MCF 10A (cell line): ENCODE measurements at regions of chr4 and their contacts with region 1.

Region 1: GRCh38 chr4:108570993-108571569 is 49.3 kb upstream of the RPL34 start:
- DNase-seq: peak; percentile 29
- H3K4me3 Mint-ChIP-seq: no peak overlapping the region
- H3K27ac Mint-ChIP-seq: no peak overlapping the region
- H3K4me1 Mint-ChIP-seq: no peaks in the 10 kb centered on the region
- H3K27me3 Mint-ChIP-seq: no peaks in the 10 kb centered on the region
- CTCF ChIP-seq: no peak

Region 2: GRCh38 chr4:108018040-108018883 is 552.8 kb before region 1 on chr4:
- CTCF ChIA-PET with region 1: interaction called, 101 read pairs
- POLR2A ChIA-PET with region 1: interaction called, 3 read pairs
- intact Hi-C with region 1: loop called (anchors 1 kb)
- DNase-seq: peak; percentile 82
- H3K4me3 Mint-ChIP-seq: no peak overlapping the region
- H3K27ac Mint-ChIP-seq: peak overlapping the region; percentile 39
- H3K4me1 Mint-ChIP-seq: no peaks in the 10 kb centered on the region
- H3K27me3 Mint-ChIP-seq: no peaks in the 10 kb centered on the region
- CTCF ChIP-seq: peak; percentile 72

Region 3: GRCh38 chr4:108053251-108053711 is 517.8 kb before region 1 on chr4:
- CTCF ChIA-PET with region 1: interaction called, 128 read pairs
- POLR2A ChIA-PET with region 1: no interaction called
- intact Hi-C with region 1: no loop called
- DNase-seq: no peak
- H3K4me3 Mint-ChIP-seq: no peak overlapping the region
- H3K27ac Mint-ChIP-seq: no peak overlapping the region
- H3K4me1 Mint-ChIP-seq: no peaks in the 10 kb centered on the region
- H3K27me3 Mint-ChIP-seq: no peaks in the 10 kb centered on the region
- CTCF ChIP-seq: no peak

Region 4: GRCh38 chr4:108492816-108493595 is 78.1 kb before region 1 on chr4:
- CTCF ChIA-PET with region 1: interaction called, 5 read pairs
- POLR2A ChIA-PET with region 1: no interaction called
- intact Hi-C with region 1: loop called (anchors 1 kb)
- DNase-seq: peak; percentile 65
- H3K4me3 Mint-ChIP-seq: no peak overlapping the region
- H3K27ac Mint-ChIP-seq: no peak overlapping the region
- H3K4me1 Mint-ChIP-seq: no peaks in the 10 kb centered on the region
- H3K27me3 Mint-ChIP-seq: no peaks in the 10 kb centered on the region
- CTCF ChIP-seq: peak; percentile 74

Region 5: GRCh38 chr4:108581083-108581482 is 10.0 kb after region 1 on chr4:
- CTCF ChIA-PET with region 1: interaction called, 11 read pairs
- POLR2A ChIA-PET with region 1: interaction called, 4 read pairs
- intact Hi-C with region 1: no loop called
- DNase-seq: no peak
- H3K4me3 Mint-ChIP-seq: no peak overlapping the region
- H3K27ac Mint-ChIP-seq: no peak overlapping the region
- H3K4me1 Mint-ChIP-seq: no peaks in the 10 kb centered on the region
- H3K27me3 Mint-ChIP-seq: no peaks in the 10 kb centered on the region
- CTCF ChIP-seq: no peak

Region 6: DNA sequence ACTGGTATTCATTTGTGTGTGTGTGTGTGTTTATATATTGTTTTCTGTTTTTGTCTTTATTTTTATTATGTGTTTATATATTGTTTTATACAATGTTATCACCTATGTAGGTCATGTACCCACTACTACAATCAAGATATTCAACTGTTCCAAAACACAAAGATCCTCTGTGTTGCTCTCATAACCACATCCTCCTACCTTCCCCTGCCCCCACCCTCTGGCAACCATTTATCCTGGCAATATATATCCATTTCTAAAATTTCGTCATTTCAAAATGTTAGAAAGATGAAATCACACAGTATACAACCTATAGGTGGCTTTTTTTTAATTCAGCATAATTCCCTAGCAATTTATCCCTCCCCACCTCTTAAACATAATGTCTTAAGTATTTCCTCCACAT is 30.5 kb after region 1 on chr4:
- CTCF ChIA-PET with region 1: no interaction called
- POLR2A ChIA-PET with region 1: no interaction called
- intact Hi-C with region 1: no loop called
- DNase-seq: no peak
- H3K4me3 Mint-ChIP-seq: no peak overlapping the region
- H3K27ac Mint-ChIP-seq: peak overlapping the region; percentile 19
- H3K4me1 Mint-ChIP-seq: peaks cover 10% of the 10 kb centered on the region
- H3K27me3 Mint-ChIP-seq: no peaks in the 10 kb centered on the region
- CTCF ChIP-seq: no peak

Region 7: GRCh38 chr4:109266891-109267290 is 695.8 kb after region 1 on chr4:
- CTCF ChIA-PET with region 1: no interaction called
- POLR2A ChIA-PET with region 1: no interaction called
- intact Hi-C with region 1: no loop called
- DNase-seq: no peak
- H3K4me3 Mint-ChIP-seq: no peak overlapping the region
- H3K27ac Mint-ChIP-seq: no peak overlapping the region
- H3K4me1 Mint-ChIP-seq: no peaks in the 10 kb centered on the region
- H3K27me3 Mint-ChIP-seq: no peaks in the 10 kb centered on the region
- CTCF ChIP-seq: no peak